HEK293 (cell line): ENCODE measurements at regions of chr16 and their contacts with region 1.

Region 1: GRCh38 chr16:71610936-71611871 is 14.8 kb upstream of the MARVELD3 start:
- H3K4me3 ChIP-seq: no peak overlapping the region
- H3K27ac ChIP-seq: no peak overlapping the region
- H3K4me1 ChIP-seq: no peaks in the 10 kb centered on the region
- CTCF ChIP-seq: peak; percentile 91

Region 2: GRCh38 chr16:71412270-71413160 is 198.7 kb before region 1 on chr16:
- CTCF ChIA-PET with region 1: interaction called, 48 read pairs
- POLR2A ChIA-PET with region 1: no interaction called
- H3K4me3 ChIP-seq: peak overlapping the region; percentile 23; the same call in 1 of the 2 replicates
- H3K27ac ChIP-seq: no peak overlapping the region
- H3K4me1 ChIP-seq: no peaks in the 10 kb centered on the region
- CTCF ChIP-seq: peak; percentile 60

Region 3: GRCh38 chr16:71520555-71520954 is 90.6 kb before region 1 on chr16:
- CTCF ChIA-PET with region 1: interaction called, 11 read pairs
- POLR2A ChIA-PET with region 1: no interaction called
- H3K4me3 ChIP-seq: no peak overlapping the region
- H3K27ac ChIP-seq: no peak overlapping the region
- H3K4me1 ChIP-seq: no peaks in the 10 kb centered on the region
- CTCF ChIP-seq: no peak

Region 4: DNA sequence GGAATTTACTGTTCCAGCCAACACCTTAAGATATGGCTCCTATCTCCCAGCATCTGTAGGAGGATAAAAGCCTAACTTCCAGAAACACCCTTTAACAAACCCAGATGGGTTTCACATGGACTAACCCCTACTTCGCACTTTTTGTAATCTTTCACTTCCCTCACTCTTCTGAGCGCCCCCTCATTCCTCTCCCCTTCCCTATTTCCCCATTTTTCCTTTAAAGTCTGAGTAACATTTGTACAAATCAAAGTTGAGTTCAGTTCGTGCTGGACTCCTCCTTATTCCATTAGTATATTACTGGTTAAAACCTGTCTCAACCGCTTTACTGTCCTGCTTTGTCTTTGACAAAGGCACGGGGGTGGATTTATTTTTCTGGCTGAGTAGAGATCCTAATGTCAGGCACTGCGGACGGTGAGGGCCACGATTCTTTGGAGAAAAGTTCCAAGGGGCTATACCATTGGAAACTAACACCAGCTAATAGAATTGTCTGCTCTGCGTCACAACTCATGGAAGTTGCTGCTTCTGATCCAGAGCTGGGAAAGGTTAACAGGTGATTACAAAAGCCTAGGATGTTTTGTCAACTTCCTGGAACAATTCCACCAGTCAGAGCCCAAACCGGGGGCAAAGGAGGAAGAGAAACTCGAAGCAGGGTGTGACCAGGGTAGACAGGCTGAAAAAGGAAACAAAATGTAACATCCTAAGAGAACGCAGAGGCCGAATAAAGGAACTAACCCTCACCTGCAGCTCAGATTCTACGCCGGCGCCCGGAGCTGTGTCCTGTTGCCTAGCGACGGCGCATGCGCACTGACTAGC is 46.8 kb before region 1 on chr16:
- CTCF ChIA-PET with region 1: interaction called, 26 read pairs
- POLR2A ChIA-PET with region 1: interaction called, 3 read pairs
- H3K4me3 ChIP-seq: peak overlapping the region; percentile 51
- H3K27ac ChIP-seq: no peak overlapping the region; the same call in 1 of the 2 replicates
- H3K4me1 ChIP-seq: 0 out of 2 replicates have a peak, but pooled peaks cover 4% of the 10 kb centered on the region
- CTCF ChIP-seq: no peak

Region 5: DNA sequence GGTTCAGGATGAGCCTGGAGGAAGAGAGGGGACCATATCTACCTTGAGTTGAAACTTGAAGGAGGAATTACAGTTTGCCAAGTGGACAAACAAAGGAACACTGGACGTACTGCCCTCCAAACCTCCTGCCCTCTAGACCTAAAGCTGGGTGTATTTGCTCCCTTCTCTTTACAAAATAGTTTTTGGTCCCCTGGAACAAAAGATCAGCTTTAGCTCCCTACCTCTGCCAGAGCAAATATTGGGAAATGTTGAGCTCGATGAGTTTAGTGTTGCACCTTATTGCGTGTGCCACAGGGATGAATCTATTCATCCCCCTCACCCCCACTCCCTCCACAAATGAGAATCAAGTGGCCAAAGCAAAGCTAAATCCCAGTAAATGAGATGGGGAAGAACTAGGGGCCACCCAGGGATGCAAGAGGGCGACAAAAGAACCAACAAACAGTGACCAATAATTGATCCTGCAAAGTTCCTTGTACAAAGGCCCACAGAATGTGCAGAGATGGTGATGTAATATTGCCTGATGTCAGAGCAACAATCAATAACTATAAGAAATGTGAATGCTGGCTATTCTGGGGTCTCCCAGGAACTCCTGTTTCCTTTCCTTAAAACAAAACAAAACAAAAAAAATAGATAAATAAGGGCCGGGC is 17.1 kb before region 1 on chr16:
- CTCF ChIA-PET with region 1: interaction called, 17 read pairs
- POLR2A ChIA-PET with region 1: no interaction called
- H3K4me3 ChIP-seq: no peak overlapping the region
- H3K27ac ChIP-seq: no peak overlapping the region
- H3K4me1 ChIP-seq: no peaks in the 10 kb centered on the region
- CTCF ChIP-seq: no peak

Region 6: GRCh38 chr16:71628810-71629209 is 17.6 kb after region 1 on chr16:
- CTCF ChIA-PET with region 1: interaction called, 26 read pairs
- POLR2A ChIA-PET with region 1: interaction called, 4 read pairs
- H3K4me3 ChIP-seq: no peak overlapping the region
- H3K27ac ChIP-seq: no peak overlapping the region
- H3K4me1 ChIP-seq: peaks cover 2% of the 10 kb centered on the region; the same call in 1 of the 2 replicates
- CTCF ChIP-seq: no peak